ENCODE measurements at regions of chr22 and their contacts with region 1.

Region 1: DNA sequence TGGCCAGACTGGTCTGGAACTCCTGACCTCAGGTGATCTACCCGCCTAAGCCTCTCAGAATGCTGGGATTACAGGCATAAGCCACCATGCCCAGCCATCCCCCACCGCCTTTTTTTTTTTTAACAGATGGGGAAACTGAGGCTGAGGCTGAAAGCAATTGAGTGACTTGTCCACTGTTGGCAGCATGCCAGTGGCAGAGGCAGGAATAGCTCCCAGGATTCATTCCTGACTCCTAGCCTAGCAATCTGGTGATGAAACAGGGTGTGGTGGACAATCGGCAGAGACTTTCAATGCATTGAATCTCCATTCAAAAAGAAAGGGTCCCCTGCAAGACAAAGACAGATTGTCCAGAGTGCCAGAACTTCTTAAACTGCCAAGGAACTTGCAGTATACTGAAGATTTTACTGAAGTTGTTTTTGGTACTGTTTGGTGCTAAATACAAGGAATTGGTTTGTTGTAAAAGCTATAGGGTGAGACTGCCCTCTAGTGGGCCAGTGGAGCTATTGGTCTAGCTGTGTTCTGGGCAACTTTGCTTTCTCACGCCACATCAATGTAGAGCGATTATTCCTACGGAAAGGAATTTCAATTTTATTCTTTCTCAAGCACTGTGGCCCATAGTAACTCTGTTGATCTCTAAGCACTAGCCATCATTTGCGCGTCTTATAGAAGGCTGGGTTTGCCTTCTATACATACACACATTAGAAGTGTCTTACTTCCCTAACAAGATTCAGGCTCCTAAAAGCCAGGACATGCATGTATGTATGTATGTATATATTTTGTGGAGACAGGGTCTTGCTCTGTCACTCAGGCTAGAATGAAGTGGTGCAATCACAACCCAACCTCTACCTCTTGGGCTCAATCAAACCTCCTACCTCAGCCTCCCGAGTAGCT is 21.0 kb downstream of the C22orf31 start:
- DNase-seq: peak; percentile 68
- ATAC-seq: peak; percentile 81
- H3K4me3 Mint-ChIP-seq: no peak overlapping the region
- H3K27ac Mint-ChIP-seq: peak overlapping the region; percentile 72
- H3K4me1 Mint-ChIP-seq: peaks cover 3% of the 10 kb centered on the region; the same call in 1 of the 2 replicates
- H3K27me3 Mint-ChIP-seq: no peaks in the 10 kb centered on the region
- CTCF ChIP-seq: peak; percentile 90

Region 2: DNA sequence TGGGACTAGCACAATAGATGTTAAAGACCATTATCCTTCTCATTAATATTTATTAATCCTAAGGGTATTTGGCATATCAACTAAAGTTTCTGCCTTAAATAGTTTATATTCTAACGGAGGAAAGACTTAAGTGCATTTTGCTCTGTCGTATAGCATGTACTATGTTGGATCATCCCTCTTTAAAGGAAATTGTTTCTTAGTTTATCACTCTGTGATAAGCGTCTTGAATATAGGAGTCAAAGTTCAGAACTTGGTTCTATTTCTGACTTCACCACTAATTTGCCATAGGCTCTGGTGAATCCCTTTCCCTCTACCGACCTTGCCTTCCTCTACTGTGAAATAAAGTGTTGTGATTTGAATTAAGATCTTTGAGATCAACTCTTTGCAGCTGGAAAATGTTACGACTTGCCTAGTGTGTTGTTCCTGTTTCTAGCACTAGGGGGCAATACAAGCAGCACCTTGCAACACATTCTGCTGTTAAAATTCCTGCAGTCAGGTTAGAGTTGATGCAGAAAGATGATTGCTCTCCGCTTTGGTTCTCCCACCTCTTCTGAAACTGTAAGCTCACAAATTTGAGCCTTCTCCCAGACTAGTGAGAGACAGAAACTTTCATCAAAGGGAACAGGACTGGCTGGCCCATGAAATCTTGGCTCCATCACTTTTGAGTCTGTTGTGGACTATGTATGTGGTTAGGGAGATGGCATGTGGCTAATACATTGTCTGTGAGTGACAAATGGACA is 185.1 kb before region 1 on chr22:
- CTCF ChIA-PET with region 1: interaction called, 60 read pairs
- POLR2A ChIA-PET with region 1: interaction called, 4 read pairs
- DNase-seq: peak; percentile 51
- ATAC-seq: peak; percentile 73
- H3K4me3 Mint-ChIP-seq: no peak overlapping the region
- H3K27ac Mint-ChIP-seq: no peak overlapping the region
- H3K4me1 Mint-ChIP-seq: 0 out of 2 replicates have a peak, but pooled peaks cover 3% of the 10 kb centered on the region
- H3K27me3 Mint-ChIP-seq: no peaks in the 10 kb centered on the region
- CTCF ChIP-seq: peak; percentile 72

Region 3: DNA sequence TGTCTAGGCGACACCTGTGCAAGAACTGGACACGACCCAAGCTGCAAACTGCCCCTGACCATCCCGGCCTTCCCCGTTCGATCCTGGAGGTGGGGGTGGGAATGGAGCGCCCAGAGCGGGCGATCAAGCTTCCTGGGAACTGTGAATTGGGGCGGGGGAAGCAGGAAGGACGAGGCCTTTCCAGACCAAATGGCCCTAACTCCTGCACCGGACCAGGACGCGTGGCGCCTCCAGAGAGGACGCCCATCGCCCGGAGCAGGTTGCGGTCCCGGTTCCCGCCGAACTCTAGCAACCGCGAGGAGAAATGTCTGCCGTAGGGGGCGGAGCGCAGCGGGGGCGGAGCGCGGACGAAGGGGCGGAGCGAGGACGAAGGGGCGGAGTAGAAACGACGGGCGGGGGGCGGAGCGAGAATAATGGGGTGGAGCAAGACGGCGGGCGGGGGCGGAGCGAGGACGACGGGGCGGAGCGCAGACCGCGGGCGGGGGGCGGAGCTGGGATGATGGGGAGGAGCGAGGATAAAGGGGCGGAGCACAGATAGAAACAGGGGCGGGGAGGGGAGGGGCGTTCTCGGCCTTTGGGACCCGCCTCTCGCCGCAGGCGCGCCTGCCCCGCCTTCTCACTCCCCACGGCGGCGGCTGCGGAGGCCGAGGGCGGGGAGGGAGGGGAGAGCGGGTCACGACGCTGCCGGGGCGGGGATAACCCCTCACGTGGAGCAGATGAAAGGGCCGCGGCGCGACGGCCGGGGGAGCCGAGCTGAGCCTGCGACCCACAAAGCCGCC is 157.6 kb before region 1 on chr22 and contains the start of gene ZNRF3:
- CTCF ChIA-PET with region 1: interaction called, 38 read pairs
- POLR2A ChIA-PET with region 1: interaction called, 12 read pairs
- DNase-seq: peak; percentile 88
- ATAC-seq: peak; percentile 85
- H3K4me3 Mint-ChIP-seq: peak within 1 kb of the TSS; percentile 92
- H3K27ac Mint-ChIP-seq: peak within 1 kb of the TSS; percentile 73
- H3K4me1 Mint-ChIP-seq: peaks cover 47% of the 10 kb centered on the region
- H3K27me3 Mint-ChIP-seq: peaks cover 11% of the 10 kb centered on the region
- CTCF ChIP-seq: no peak
- total RNA-seq, gene ZNRF3: 20.6 to 25.4 TPM (median 21.6 TPM) in 3 replicates

Region 4: DNA sequence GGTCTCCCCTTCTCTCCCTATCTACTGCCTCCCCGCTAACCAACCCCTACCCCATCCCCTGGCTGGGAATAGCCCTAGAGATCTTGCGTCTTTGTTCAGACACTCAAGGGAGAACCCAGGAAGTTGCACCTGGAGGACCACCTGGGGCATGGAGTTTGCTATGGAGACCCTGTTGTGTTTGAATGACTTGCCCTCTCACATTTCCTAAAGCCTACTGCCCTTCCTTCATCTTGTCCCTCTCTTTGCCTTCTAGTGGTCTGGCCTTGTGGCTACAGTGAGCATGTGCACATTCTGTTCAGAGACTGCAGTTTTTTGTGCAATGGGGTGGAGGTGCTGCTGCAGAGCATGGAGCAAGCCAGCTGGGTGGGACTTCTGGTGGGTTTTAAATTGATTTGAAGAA is 114.7 kb before region 1 on chr22:
- CTCF ChIA-PET with region 1: interaction called, 10 read pairs
- POLR2A ChIA-PET with region 1: no interaction called
- DNase-seq: peak; percentile 27
- ATAC-seq: peak; percentile 53
- H3K4me3 Mint-ChIP-seq: no peak overlapping the region
- H3K27ac Mint-ChIP-seq: peak overlapping the region; percentile 69
- H3K4me1 Mint-ChIP-seq: peaks cover 66% of the 10 kb centered on the region
- H3K27me3 Mint-ChIP-seq: no peaks in the 10 kb centered on the region
- CTCF ChIP-seq: no peak

Region 5: DNA sequence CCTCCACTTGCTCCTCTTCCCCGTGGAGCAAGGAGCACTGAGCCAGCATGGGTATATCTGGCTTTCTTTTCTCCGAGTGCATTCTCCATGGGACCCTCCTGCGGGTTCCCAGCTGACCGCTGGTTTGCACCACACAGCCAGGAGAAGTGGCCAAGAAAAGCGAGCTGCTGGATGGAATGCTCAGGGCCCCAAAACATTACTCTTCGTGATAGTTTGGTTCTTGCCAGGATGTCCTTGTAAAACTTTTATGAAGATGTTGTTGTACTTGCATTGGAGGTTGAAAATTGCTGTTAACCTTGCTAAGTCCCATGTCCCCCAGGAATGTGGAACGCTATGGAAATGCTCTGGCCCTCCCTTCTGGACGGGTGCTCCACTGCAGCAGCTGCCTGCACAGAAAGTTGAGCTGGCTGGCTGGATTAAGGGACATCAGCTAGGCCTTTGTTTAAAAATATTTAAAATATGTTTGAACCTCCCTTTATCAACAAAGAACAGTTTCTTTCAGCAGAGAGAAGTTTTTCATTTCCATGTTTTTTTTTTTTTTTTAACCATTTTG is 88.6 kb before region 1 on chr22:
- CTCF ChIA-PET with region 1: interaction called, 16 read pairs
- POLR2A ChIA-PET with region 1: no interaction called
- DNase-seq: peak; percentile 30
- ATAC-seq: peak; percentile 66
- H3K4me3 Mint-ChIP-seq: no peak overlapping the region
- H3K27ac Mint-ChIP-seq: 0 out of 2 replicates have a peak overlapping the region, but pooled peaks have one; percentile 8
- H3K4me1 Mint-ChIP-seq: peaks cover 56% of the 10 kb centered on the region
- H3K27me3 Mint-ChIP-seq: no peaks in the 10 kb centered on the region
- CTCF ChIP-seq: no peak

Region 6: GRCh38 chr22:29055192-29055830 is 14.7 kb after region 1 on chr22:
- CTCF ChIA-PET with region 1: interaction called, 34 read pairs
- POLR2A ChIA-PET with region 1: interaction called, 4 read pairs
- DNase-seq: peak; percentile 34
- ATAC-seq: peak; percentile 46
- H3K4me3 Mint-ChIP-seq: peak overlapping the region; percentile 24
- H3K27ac Mint-ChIP-seq: peak overlapping the region; percentile 52
- H3K4me1 Mint-ChIP-seq: peaks cover 41% of the 10 kb centered on the region
- H3K27me3 Mint-ChIP-seq: no peaks in the 10 kb centered on the region
- CTCF ChIP-seq: no peak